ENCODE measurements at regions of chr13 and their contacts with region 1.

Region 1: DNA sequence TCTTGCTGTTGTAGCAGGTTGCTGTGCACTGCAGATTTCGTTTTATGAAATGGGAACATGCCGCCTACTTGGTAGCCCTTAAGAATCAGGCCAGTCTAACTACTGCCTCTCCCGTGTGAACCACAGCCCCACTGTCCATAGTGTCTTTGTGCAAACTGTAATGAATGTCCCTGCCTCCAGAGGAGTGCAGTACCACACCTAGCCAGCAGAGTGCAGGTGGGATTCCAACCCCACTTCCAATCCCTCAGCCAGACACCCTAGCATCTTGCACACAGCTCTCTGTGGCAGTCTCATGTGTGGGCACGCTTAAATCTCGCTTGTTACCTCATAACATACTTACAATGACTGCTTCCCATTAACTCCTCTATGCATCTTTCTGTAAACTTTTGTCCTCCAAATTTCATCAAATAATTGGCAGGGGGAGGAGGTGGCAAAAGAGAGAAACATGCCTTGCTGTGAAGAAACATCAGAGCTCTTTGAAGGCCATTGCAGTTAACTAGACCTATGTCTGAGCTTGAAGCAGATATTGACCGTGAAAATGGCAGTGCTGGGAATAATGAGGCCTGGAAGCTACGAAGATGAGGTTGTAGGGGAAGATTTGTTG is 47.2 kb downstream of the ZAR1L start:
- DNase-seq: peak; percentile 55
- H3K27ac ChIP-seq: no peak overlapping the region
- CTCF ChIP-seq: peak; percentile 39

Region 2: GRCh38 chr13:31968473-31968872 is 299.5 kb before region 1 on chr13:
- CTCF ChIA-PET with region 1: no interaction called
- POLR2A ChIA-PET with region 1: no interaction called
- DNase-seq: no peak
- H3K27ac ChIP-seq: no peak overlapping the region
- CTCF ChIP-seq: no peak

Region 3: DNA sequence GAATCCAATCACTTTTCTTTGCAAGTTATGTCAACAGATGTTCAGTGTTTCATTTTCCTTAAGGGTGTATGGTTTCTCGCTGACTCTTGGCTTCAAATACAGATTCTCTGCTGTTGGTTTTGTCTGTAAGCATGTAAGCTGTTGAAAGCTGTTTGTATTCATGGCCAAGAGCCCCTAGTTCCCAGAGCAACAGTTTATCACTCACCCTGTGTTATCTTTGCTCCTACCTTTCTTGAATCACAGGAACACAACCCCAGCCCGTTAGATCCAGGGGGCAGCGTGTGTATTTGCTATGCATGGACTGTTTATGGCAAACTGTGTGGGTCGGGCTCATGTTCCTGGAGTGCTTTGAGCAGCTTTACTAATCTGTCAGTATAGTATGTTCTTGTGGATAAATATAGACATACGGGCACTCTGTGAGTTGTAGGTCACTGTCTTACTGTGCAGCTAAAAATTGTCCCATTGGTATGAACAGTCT is 207.5 kb before region 1 on chr13:
- CTCF ChIA-PET with region 1: no interaction called
- POLR2A ChIA-PET with region 1: no interaction called
- DNase-seq: no peak
- H3K27ac ChIP-seq: no peak overlapping the region
- CTCF ChIP-seq: no peak

Region 4: GRCh38 chr13:32254416-32254815 is 13.5 kb before region 1 on chr13:
- CTCF ChIA-PET with region 1: interaction called, 10 read pairs
- POLR2A ChIA-PET with region 1: no interaction called
- DNase-seq: no peak
- H3K27ac ChIP-seq: no peak overlapping the region
- CTCF ChIP-seq: no peak

Measured in RWPE1 (cell line).